Right ventricle myocardium inferior (tissue), 1 donor: ENCODE measurements at regions of chr13 and their contacts with region 1.

Region 1: DNA sequence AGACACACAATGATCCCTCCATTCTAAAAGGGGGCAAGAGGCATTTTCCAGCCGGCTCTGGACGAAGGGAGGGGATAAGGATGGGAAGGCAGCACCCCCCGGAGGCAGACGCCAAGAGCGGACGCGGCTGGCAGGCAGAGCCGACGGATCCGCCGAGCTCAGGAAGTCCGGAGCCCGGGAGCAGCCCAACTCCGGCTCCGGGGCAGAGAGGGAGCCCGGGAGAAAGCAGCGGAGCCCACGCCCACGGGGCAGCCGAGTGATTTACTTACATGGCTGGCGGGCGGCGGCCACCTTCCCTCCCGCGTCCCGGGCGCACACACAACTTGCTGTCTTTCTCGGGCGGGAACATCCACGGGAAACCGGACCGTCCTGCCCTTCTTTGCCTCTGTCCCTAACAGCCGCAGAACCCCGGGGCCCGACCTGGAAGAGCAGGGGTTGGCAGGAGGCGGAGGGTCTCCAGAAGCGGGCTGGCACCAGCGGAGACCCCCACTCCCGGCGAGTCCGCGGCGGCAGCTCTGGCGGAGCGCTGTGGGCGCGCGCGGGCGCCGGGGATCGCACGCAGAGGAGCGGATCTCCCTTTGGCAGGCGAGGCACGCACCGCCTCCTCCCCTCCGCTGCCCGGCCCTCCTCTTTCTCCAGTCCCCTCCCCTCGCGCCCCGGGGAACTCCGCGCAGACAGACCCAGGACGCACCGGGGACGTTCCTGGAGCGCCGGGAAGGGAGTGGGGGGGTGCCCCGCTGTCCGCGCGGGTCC is at the start of gene LHFPL6:
- DNase-seq: peak; percentile 90
- ATAC-seq: peak; percentile 97
- total RNA-seq, gene LHFPL6: 63.7 TPM

Region 2: GRCh38 chr13:39263033-39263432 is 339.8 kb before region 1 on chr13:
- intact Hi-C with region 1: loop called (anchors 5 kb)
- DNase-seq: no peak
- ATAC-seq: peak; percentile 88

Region 3: GRCh38 chr13:39273953-39274738 is 328.6 kb before region 1 on chr13:
- intact Hi-C with region 1: loop called (anchors 2 kb)
- DNase-seq: no peak
- ATAC-seq: peak; percentile 50

Region 4: GRCh38 chr13:39321574-39321973 is 281.2 kb before region 1 on chr13:
- intact Hi-C with region 1: loop called (anchors 5 kb)
- DNase-seq: no peak
- ATAC-seq: peak; percentile 82

Region 5: GRCh38 chr13:39415008-39415802 is 187.6 kb before region 1 on chr13:
- intact Hi-C with region 1: loop called (anchors 1 kb)
- DNase-seq: no peak
- ATAC-seq: peak; percentile 70

Region 6: DNA sequence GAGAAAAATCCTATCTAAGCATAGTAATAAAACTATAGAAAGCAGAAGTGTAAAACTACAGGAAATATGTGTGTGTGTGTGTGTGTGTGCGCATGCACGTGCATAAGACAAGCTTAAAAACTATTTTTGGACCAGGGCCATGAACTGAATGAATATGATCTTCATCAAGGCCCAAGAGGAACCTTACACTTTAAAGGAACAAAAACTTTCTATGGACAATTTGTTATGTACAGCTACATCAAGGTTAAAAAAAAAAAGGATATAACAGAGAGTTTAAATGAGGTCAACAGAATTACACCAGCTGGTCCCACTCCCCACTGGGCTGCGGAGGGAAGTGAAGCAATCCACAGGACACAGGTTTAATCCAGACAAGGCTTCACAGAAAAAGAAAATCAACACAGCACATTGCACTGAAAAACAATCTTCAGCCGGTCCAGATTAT is 150.9 kb before region 1 on chr13:
- intact Hi-C with region 1: loop called (anchors 2 kb)
- DNase-seq: peak; percentile 71
- ATAC-seq: peak; percentile 86

Region 7: GRCh38 chr13:39527961-39528660 is 74.7 kb before region 1 on chr13:
- intact Hi-C with region 1: loop called (anchors 5 kb)
- DNase-seq: no peak
- ATAC-seq: peak; percentile 49